Dendritic cell treated with granulocyte-macrophage colony-stimulating factor and Interleukin-4, amounts not matched to agents 40 ng/mL and 50 ng/mL, for 4 days (primary cell): ENCODE measurements at regions of chr9 and their contacts with region 1.

Region 1: GRCh38 chr9:35732122-35732799 is at the starts of genes CREB3 and TLN1:
- H3K4me3 Mint-ChIP-seq: no peak within 1 kb of the TSS
- H3K27ac Mint-ChIP-seq: no peak within 1 kb of the TSS
- H3K4me1 Mint-ChIP-seq: peaks cover 27% of the 10 kb centered on the region
- H3K27me3 Mint-ChIP-seq: no peaks in the 10 kb centered on the region

Region 2: DNA sequence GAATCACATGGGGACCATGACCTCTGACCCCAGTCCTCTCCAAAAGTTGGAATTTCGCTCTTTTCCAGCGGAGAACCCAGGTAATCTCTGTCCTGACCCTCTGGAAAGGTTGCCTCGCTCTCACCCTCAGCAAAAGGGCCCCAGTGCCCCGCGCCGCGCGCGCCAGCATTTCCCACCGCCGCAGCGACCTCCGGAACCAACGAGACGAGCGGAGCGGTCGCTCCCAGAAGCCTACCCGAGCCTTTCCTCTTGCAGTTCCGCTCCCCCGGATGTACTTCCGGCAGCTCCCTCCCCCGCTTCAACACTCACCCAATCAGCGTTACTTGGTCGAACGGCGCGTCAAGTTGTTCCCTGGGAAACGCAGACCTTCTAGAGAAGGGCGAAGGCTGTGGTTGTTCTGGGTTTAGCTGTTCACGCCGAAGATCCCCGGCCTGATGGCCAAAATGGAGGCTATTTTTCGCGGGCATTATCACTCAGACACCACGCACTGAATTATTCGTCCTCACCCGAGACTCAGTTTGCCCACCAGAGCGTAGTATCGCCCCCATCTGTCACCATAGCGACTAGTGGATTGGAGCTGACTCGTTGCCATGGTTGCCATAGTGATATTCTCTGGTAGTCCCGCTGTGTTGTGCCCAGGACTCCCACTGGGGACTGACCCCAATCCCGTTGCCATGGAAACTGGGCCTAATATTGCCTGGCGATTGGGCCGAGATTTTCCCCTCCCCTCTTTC is 629.2 kb before region 1 on chr9 and contains the start of gene STOML2:
- intact Hi-C with region 1: loop called (anchors 5 kb)
- H3K4me3 Mint-ChIP-seq: peak within 1 kb of the TSS; percentile 98
- H3K27ac Mint-ChIP-seq: peak within 1 kb of the TSS; percentile 93
- H3K4me1 Mint-ChIP-seq: peaks cover 58% of the 10 kb centered on the region
- H3K27me3 Mint-ChIP-seq: no peaks in the 10 kb centered on the region

Region 3: GRCh38 chr9:35603987-35604577 is 128.2 kb before region 1 on chr9:
- intact Hi-C with region 1: loop called (anchors 1 kb)
- H3K4me3 Mint-ChIP-seq: peak overlapping the region; percentile 96
- H3K27ac Mint-ChIP-seq: peak overlapping the region; percentile 94
- H3K4me1 Mint-ChIP-seq: peaks cover 56% of the 10 kb centered on the region
- H3K27me3 Mint-ChIP-seq: no peaks in the 10 kb centered on the region

Region 4: GRCh38 chr9:35646533-35647265 is 85.6 kb before region 1 on chr9:
- intact Hi-C with region 1: loop called (anchors 1 kb)
- H3K4me3 Mint-ChIP-seq: peak overlapping the region; percentile 81
- H3K27ac Mint-ChIP-seq: peak overlapping the region; percentile 92
- H3K4me1 Mint-ChIP-seq: peaks cover 63% of the 10 kb centered on the region
- H3K27me3 Mint-ChIP-seq: no peaks in the 10 kb centered on the region

Region 5: DNA sequence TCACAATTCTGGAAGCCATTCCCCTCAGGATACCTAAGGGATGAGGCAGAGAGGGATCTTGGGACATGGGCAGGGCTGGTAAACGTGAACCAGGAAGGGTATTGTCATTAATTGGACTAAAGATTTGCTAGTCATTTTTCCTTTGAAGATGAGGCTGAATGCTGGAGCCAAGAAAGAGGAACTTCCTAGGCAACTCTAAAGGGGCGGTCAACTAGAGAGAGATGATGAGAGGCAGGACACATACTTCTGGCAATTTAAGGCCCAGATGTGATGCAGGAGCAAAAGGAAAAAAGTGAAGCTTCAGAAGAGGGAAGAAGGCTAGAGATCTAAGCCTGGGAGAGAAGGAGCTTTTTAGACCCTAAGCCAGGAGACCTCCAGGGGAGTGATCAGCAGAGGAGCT is 11.2 kb after region 1 on chr9:
- intact Hi-C with region 1: loop called (anchors 1 kb)
- H3K4me3 Mint-ChIP-seq: peak overlapping the region; percentile 31
- H3K27ac Mint-ChIP-seq: peak overlapping the region; percentile 77
- H3K4me1 Mint-ChIP-seq: peaks cover 59% of the 10 kb centered on the region
- H3K27me3 Mint-ChIP-seq: no peaks in the 10 kb centered on the region

Region 6: GRCh38 chr9:35748858-35749514 is 16.7 kb after region 1 on chr9 and contains the starts of genes GBA2 and RGP1:
- intact Hi-C with region 1: loop called (anchors 1 kb)
- H3K4me3 Mint-ChIP-seq: peak within 1 kb of the TSS; percentile 92
- H3K27ac Mint-ChIP-seq: peak within 1 kb of the TSS; percentile 85
- H3K4me1 Mint-ChIP-seq: peaks cover 47% of the 10 kb centered on the region
- H3K27me3 Mint-ChIP-seq: no peaks in the 10 kb centered on the region

Region 7: DNA sequence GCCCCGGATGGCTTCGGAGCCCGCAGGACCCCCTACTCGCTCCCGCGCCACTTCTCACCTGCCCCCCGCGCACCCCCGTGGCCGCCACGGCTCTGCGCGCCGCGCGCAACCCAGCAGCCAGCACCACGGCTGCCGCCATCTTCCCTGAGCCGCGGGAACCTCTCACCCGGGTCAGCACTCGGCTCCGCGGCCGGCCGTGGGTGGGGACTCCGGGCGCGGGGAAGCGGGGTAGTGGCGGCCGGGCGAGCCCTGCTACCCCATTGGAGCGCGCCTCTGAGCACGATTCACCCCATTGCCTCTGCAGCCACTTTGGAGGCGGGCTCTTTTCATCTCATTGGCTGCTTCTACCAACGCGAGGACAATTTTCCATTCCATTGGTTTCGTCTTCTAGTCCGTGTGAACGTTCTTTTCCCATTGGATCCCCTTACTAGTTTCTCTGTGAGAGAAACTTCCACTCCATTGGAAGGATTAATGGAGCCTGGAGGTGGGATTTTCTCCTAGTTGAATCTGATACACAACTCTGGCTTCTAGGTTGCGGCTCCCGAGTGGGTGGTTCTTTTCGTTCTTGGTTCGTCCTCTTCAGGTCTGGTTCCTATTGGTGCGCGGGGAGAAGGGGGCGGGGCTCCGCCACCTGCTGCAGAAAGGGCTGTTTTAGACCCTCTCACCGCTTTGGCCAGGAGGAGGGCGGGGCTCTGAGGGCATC is 82.7 kb after region 1 on chr9 and contains the start of gene HINT2:
- intact Hi-C with region 1: loop called (anchors 2 kb)
- H3K4me3 Mint-ChIP-seq: peak within 1 kb of the TSS; percentile 93
- H3K27ac Mint-ChIP-seq: peak within 1 kb of the TSS; percentile 86
- H3K4me1 Mint-ChIP-seq: peaks cover 56% of the 10 kb centered on the region
- H3K27me3 Mint-ChIP-seq: peaks cover 3% of the 10 kb centered on the region